Activated CD4-positive, alpha-beta memory T cell treated with anti-CD3 and anti-CD28 coated beads for 36 hours (primary cell): ENCODE measurements at regions of chr17 and their contacts with region 1.

Region 1: GRCh38 chr17:47615766-47616424 is 33.8 kb upstream of the KPNB1 start:
- DNase-seq: no peak
- H3K4me3 Mint-ChIP-seq: no peak overlapping the region
- H3K27ac Mint-ChIP-seq: no peak overlapping the region
- H3K4me1 Mint-ChIP-seq: peaks cover 16% of the 10 kb centered on the region
- H3K27me3 Mint-ChIP-seq: no peaks in the 10 kb centered on the region

Region 2: DNA sequence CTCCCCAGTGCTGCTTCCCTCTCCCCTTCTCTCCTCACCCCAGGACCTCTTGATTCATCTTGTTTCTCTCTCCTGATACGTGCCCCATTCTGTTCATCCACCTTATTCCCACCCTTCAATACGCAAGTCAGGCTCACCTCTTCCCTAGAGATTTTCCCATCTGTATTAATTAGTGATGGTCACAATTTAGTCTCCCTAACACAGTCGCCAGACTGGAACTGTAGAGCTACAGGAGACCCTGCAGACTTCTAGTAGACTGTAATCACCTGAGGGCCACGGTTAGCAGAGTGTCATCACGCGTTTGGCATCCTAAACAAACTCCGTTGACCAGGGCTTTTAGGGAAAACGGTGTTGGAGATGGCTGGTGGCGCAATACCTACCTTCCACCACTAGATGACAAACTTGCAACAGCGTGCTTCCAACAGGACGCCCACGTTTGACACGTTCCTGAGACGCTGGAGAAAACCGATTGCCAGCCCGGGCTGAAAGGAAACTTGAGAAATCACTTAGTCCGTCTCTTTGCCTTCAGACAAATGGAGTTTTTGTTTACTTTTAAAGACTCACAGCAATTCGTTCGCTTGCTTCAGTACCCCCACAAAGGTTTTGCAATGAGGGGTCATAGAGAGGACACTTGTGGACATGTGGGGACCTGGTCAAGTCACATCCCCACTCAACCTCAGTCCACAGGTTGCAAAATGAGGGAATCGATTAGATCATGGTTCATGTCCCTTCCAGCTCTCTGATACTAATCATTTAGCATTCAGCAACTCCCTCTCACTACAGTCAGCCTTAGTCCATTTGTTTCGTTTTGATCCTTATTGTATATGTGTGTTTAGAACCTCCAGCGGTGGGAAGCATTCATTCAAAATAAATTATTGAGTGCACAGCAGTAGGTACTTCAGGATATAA is 386.1 kb before region 1 on chr17:
- CTCF ChIA-PET with region 1: interaction called, 8 read pairs
- POLR2A ChIA-PET with region 1: no interaction called
- intact Hi-C with region 1: loop called (anchors 5 kb)
- DNase-seq: peak; percentile 85
- H3K4me3 Mint-ChIP-seq: peak overlapping the region; percentile 60
- H3K27ac Mint-ChIP-seq: no peak overlapping the region
- H3K4me1 Mint-ChIP-seq: peaks cover 11% of the 10 kb centered on the region
- H3K27me3 Mint-ChIP-seq: no peaks in the 10 kb centered on the region

Region 3: DNA sequence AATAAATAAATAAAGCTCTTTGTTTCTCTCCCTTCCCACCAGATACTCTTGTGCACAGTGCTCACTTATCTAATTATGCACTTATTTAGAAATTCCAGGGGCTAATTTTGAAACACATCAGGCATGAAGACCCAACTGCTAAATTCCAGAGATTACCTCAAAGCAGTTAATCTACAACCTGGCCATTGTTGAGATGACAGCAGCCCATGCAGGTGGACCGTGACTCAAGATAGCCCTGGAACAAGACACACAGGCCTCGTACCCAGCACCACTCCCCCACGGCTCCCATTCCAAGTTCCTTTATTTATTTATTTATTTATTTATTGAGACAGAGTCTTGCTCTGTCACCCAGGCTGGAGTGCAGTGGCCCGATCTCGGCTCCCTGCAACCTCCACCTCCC is 145.1 kb before region 1 on chr17:
- CTCF ChIA-PET with region 1: no interaction called
- POLR2A ChIA-PET with region 1: no interaction called
- intact Hi-C with region 1: no loop called
- DNase-seq: no peak
- H3K4me3 Mint-ChIP-seq: no peak overlapping the region
- H3K27ac Mint-ChIP-seq: no peak overlapping the region
- H3K4me1 Mint-ChIP-seq: no peaks in the 10 kb centered on the region
- H3K27me3 Mint-ChIP-seq: no peaks in the 10 kb centered on the region

Region 4: DNA sequence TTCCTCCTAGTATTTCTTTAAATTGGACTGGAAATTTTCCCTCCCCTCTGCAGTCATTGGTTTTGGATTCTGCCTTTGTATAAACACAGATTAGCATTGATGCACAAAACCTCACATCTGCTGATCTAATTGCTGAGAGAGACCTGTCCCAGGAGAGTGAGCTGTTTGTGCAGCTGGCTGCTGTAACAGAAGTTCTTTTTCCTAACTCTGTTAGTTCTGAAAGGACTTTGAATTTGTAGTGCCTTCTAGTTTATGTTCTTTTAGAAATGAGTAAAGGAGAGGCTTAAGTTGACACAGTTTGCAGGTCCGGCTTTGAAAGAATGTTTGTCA is 11.3 kb before region 1 on chr17:
- CTCF ChIA-PET with region 1: interaction called, 29 read pairs
- POLR2A ChIA-PET with region 1: no interaction called
- intact Hi-C with region 1: no loop called
- DNase-seq: no peak
- H3K4me3 Mint-ChIP-seq: no peak overlapping the region
- H3K27ac Mint-ChIP-seq: no peak overlapping the region
- H3K4me1 Mint-ChIP-seq: peaks cover 2% of the 10 kb centered on the region
- H3K27me3 Mint-ChIP-seq: no peaks in the 10 kb centered on the region

Region 5: DNA sequence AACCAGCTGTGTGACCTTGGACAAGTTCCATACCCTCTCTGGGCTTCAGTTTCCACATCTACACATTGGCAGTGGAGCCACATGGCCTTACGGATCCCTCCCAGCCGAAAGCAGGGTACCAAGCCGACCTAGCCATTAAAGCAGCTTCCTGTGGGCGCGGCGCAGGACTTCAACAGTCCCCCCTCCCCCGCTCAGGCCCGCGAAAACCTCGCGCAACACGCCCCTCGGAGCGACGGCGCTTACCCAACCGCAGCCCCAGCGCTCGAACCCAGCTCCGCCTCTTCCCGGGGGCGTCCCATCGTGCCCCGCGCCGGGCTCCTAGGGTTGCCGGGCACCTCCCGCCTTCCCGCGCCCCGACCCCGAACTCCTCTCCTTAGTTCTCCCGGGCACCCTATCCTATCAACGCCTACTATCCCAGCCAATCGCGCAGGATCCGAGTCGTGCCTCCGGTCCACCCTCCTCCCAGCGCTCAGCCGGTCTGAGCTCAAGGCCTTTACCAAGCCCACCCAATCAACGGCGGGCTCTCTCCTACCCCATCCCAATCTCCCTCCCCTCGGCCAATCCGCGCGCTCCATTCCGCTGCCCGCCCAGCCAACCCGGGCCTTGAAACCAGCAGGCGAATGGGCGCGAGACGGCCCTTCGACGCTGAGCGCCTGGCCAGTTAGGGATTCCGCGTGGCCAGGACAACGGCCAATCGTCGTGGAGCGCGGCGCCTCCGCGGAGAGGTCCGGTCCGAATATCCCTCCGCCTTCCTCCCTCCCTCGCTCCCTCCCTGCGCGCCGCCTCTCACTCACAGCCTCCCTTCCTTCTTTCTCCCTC is 33.5 kb after region 1 on chr17 and contains the start of gene KPNB1:
- CTCF ChIA-PET with region 1: interaction called, 16 read pairs
- POLR2A ChIA-PET with region 1: interaction called, 4 read pairs
- intact Hi-C with region 1: loop called (anchors 1 kb)
- DNase-seq: peak; percentile 100
- H3K4me3 Mint-ChIP-seq: peak within 1 kb of the TSS; percentile 92
- H3K27ac Mint-ChIP-seq: peak within 1 kb of the TSS; percentile 98
- H3K4me1 Mint-ChIP-seq: peaks cover 44% of the 10 kb centered on the region
- H3K27me3 Mint-ChIP-seq: no peaks in the 10 kb centered on the region
- total RNA-seq, gene KPNB1: 475 to 488 TPM

Region 6: DNA sequence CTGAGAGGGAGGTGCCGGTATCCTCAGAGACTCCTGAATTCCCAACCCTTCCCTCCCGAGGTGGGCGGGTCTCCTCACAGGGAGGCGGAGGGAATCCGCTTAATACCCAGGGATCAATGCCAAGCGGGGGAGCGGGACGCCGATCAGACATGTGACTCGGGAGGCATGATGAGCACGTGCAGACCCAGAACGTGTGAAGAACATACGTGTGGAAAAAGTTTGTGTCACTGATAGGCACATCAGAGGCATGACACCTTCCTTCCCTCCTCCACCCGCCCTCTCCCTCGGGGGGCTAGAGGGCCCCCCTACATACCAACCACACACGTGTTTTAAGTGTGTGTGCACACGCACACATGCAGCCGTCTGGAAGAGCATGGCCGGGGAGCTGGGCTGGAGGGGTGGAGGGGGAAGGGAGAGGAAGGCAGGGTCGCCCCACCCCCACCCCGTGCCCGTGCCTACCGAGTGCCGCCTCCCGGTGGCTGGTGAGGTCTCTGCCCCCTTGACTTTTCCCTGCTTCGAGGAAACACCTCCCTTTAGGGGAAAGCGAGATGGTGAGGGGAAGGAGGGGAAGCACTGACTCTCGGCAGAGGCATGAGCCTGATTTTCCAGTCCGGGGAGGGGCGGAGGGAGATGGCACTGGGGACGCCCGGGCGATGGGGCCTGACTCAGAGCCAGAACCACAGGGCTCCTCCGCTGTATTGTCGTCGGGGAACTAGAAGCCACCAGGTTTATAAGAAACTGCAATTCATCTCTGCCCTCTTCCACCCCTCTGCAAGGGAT is 105.0 kb after region 1 on chr17:
- CTCF ChIA-PET with region 1: no interaction called
- POLR2A ChIA-PET with region 1: no interaction called
- intact Hi-C with region 1: loop called (anchors 1 kb)
- DNase-seq: peak; percentile 99
- H3K4me3 Mint-ChIP-seq: peak overlapping the region; percentile 72
- H3K27ac Mint-ChIP-seq: peak overlapping the region; percentile 94
- H3K4me1 Mint-ChIP-seq: peaks cover 92% of the 10 kb centered on the region
- H3K27me3 Mint-ChIP-seq: no peaks in the 10 kb centered on the region

Region 7: GRCh38 chr17:47862621-47863440 is 246.9 kb after region 1 on chr17:
- CTCF ChIA-PET with region 1: no interaction called
- POLR2A ChIA-PET with region 1: no interaction called
- intact Hi-C with region 1: no loop called
- DNase-seq: no peak
- H3K4me3 Mint-ChIP-seq: no peak overlapping the region
- H3K27ac Mint-ChIP-seq: no peak overlapping the region
- H3K4me1 Mint-ChIP-seq: peaks cover 25% of the 10 kb centered on the region
- H3K27me3 Mint-ChIP-seq: peaks cover 4% of the 10 kb centered on the region